H1 (cell line): ENCODE measurements at regions of chr14 and their contacts with region 1.

Region 1: DNA sequence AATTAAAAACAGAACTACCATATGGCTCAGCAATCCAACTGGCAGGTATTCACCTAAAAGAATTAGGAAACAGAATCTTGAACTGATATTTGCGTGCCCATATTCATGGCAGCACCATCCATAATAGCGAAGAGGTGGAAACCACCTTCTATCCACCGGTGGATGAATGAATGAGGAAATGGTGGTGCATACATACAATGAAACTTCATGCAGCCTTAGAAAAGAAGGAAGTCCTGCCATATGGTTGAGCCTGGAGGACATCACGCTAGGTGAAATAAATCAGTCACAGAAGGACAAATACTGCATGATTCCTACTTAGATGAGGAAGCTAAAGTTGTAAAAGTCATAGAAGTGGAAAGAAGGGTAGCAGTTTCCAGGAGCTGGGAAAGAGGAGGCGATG is 6.6 kb downstream of the TCL1A start:
- DNase-seq: no peak
- H3K4me3 ChIP-seq: no peak overlapping the region
- H3K27ac ChIP-seq: no peak overlapping the region
- H3K4me1 ChIP-seq: peaks cover 2 to 13% (median 5%) of the 10 kb centered on the region in 4 experiments
- H3K27me3 ChIP-seq: peaks cover 12 to 37% (median 23%) of the 10 kb centered on the region in 4 experiments
- CTCF ChIP-seq: no peak
- EP300 ChIP-seq: no peak
- POLR2A ChIP-seq: no peak
- RAD21 ChIP-seq: no peak

Region 2: DNA sequence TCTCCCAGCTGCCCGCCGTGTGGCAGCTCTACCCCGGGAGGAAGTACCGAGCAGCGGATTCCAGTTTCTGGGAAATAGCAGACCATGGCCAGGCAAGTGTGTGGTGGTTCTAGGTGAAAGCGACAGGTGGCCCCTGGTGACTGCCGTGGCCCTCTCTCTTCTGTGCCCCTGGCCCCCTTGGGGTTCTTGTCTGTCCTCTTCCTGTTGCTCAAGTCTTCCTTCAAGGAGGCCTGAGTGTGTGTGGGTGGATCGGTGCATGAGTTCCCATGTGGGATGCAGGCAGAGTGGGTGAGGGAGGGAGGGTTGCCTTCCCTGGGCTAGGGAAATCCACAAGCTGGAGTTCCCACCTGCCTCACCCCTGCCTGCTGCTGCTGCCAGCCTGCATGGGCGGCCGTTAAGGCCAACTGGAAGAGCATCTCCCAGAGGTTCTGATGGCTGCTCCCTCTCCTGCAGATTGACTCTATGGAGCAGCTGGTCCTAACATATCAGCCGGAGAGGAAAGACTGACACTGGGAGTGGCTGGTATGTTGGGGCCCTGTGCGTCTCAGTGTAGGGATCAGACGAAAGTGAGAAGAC is 16.4 kb before region 1 on chr14:
- CTCF ChIA-PET with region 1: interaction called, 14 read pairs
- POLR2A ChIA-PET with region 1: no interaction called
- DNase-seq: no peak
- H3K4me3 ChIP-seq: no peak overlapping the region
- H3K27ac ChIP-seq: no peak overlapping the region
- H3K4me1 ChIP-seq: peaks cover 3 to 10% (median 5%) of the 10 kb centered on the region in 4 experiments
- H3K27me3 ChIP-seq: peaks cover 0 to 5% (median 0%) of the 10 kb centered on the region in 4 experiments; a peak in 4 of 7 replicates
- CTCF ChIP-seq: no peak
- EP300 ChIP-seq: no peak
- POLR2A ChIP-seq: no peak
- RAD21 ChIP-seq: no peak